CD14-positive monocyte (primary cell): ENCODE measurements at regions of chr6 and their contacts with region 1.

Region 1: DNA sequence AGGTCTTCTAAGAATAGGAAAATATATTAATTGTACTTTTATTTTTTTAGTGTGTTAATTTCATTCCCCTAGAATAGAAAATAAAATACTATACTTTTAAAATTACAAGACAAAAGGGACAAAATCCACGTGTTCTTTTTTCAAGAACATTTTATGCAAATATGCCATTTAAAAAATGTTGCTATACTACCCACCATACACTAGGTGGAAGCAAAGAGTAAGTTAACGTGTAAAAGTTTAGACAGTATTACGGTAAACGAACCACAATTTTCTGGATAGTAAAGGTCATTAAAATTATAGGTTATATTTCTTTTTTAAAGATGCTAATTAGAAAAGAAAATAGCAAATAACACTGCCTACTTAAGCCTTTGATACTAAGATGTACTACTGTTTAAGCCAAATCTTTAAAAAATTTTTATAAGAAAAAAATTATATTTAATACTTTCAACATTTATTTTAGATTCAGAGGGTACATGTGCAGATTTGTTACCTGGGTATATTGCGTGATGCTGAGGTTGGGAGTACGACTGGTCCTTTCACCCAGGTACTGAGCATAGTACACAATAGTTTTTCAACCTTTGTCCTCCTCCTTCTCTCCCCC is 287.6 kb downstream of the PHF3 start:
- DNase-seq: peak; percentile 1 to 45 (median 10)
- H3K4me3 ChIP-seq: no peak overlapping the region
- H3K4me3 Mint-ChIP-seq: no peak overlapping the region
- H3K27ac ChIP-seq: no peak overlapping the region
- H3K27ac Mint-ChIP-seq: no peak overlapping the region
- H3K4me1 ChIP-seq: peaks cover 0 to 3% of the 10 kb centered on the region in 2 donors
- H3K4me1 Mint-ChIP-seq: peaks cover 15% of the 10 kb centered on the region
- H3K27me3 ChIP-seq: no peaks in the 10 kb centered on the region
- H3K27me3 Mint-ChIP-seq: no peaks in the 10 kb centered on the region
- CTCF ChIP-seq: peak; percentile 72

Region 2: GRCh38 chr6:64050590-64050989 is 127.4 kb after region 1 on chr6:
- intact Hi-C with region 1: no loop called
- DNase-seq: no peak
- H3K4me3 ChIP-seq: no peak overlapping the region
- H3K4me3 Mint-ChIP-seq: no peak overlapping the region
- H3K27ac ChIP-seq: no peak overlapping the region
- H3K27ac Mint-ChIP-seq: no peak overlapping the region
- H3K4me1 ChIP-seq: no peaks in the 10 kb centered on the region
- H3K4me1 Mint-ChIP-seq: no peaks in the 10 kb centered on the region
- H3K27me3 ChIP-seq: no peaks in the 10 kb centered on the region
- H3K27me3 Mint-ChIP-seq: peaks cover 0 to 2% (median 0%) of the 10 kb centered on the region in 3 donors
- CTCF ChIP-seq: no peak

Region 3: DNA sequence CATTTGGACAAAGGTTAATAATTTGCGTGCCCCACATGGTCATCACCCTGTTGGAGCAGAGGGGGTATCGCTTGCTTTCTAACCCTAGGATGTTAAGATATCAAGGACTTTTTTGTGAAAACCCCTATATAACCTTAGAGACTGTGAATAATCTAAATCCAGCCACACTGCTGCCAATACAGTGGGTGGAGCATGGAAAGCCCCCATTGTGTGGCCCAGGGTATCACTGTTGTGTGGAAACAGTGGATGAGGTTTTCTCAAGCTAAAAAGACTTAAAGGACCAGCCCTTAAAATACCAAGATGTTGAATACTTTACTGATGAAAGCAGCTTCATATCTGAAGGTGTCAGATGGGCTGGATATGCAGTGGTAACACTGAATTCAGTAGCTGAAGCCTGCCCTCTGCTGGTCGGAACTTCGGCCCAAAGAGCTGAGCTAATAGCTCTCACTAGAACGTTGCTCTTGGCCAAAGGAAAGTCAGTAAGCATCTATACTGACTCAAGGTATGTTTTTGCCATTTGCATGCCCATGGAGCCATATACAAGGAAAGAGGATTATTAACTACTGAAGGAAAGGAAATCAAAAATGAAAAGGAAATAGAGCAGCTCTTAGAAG is 407.6 kb after region 1 on chr6:
- intact Hi-C with region 1: loop called in 1 of 2 experiments (anchors 5 kb)
- DNase-seq: peak in 2 of 3 donors; percentile 10 to 18
- H3K4me3 ChIP-seq: no peak overlapping the region
- H3K4me3 Mint-ChIP-seq: no peak overlapping the region
- H3K27ac ChIP-seq: no peak overlapping the region
- H3K27ac Mint-ChIP-seq: no peak overlapping the region
- H3K4me1 ChIP-seq: no peaks in the 10 kb centered on the region
- H3K4me1 Mint-ChIP-seq: no peaks in the 10 kb centered on the region
- H3K27me3 ChIP-seq: no peaks in the 10 kb centered on the region
- H3K27me3 Mint-ChIP-seq: peaks cover 0 to 4% (median 2%) of the 10 kb centered on the region in 3 donors
- CTCF ChIP-seq: peak; percentile 51